Right ventricle myocardium inferior (tissue), 1 donor: ENCODE measurements at regions of chr4 and their contacts with region 1.

Region 1: DNA sequence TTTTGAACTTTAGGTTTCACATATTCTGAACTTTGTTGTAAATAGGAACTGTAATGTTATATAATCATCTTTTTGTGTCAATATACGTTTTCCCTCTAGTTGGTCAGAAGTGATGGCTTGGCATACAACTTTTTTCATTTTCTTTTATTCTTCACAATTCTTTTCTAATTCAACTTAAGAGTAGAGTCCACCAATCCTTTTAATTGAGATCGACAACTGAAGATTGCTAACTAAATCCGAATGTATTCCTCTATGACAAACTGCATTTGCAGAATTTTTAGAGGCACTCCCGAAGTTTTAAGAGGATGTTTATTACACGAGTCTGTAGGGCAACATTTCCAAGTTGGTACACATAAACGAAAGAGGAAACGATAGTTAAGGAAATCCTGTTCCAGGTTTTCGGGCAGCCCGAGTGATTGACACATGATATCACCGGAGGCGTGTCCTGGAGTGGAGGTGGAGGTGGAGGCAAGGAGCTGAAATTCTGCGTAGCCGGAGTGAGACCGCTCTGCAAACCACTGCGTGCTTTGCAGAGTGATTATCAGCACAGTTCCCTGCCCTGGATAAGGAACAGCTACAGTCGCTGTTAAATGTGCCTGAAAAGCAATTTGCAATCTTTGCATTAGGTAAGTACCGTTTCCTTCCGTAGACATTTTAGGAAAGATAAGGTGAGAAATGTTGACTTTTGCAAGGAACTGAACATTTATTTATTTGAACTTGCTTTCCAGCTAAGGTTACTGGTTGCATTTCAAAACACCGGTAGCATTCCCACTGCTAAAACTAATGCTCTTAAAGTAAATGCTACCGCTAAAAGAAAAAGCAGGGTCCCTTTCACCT is at the start of gene SPRY1:
- DNase-seq: peak; percentile 89
- ATAC-seq: peak; percentile 89
- total RNA-seq, gene SPRY1: 37.0 TPM

Region 2: DNA sequence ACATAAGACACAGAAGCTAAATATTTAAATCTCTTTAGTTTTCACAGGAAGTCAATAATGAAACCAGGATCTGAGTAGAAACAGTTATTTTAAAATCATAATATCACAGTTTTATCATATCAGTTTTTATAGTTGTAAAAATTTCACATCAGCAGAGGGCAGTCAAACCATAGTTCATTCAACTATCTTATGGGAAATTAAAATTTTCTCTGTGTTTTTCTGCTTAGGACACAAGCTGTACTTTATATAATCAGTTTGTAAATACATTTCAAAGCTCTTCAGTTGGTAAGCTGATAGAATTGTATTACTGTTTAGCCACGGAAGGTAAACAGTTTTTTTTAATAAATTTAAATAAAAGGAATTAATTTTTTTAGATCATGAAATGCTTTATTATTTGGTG is 269.3 kb before region 1 on chr4:
- intact Hi-C with region 1: loop called (anchors 5 kb)
- DNase-seq: no peak
- ATAC-seq: no peak

Region 3: DNA sequence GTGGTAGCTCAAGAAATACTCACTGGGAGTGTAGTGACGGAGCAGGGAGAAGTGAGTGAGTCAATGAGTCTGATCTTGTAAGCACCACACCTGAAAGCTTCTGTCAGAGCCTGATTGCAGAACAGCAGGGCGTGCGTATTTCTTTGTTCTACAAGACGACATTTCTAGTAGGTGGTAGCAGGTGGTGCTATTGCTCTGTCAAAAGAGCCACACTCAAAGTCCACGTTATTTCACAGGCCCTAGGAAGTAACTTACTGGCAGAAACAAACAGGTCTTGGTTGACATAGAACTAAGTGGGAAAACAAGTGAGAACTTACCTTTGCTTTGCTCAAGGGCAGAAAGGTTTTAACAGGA is 46.4 kb before region 1 on chr4:
- intact Hi-C with region 1: loop called (anchors 5 kb)
- DNase-seq: no peak
- ATAC-seq: no peak

Region 4: GRCh38 chr4:123461996-123462395 is 65.5 kb after region 1 on chr4:
- intact Hi-C with region 1: no loop called
- DNase-seq: no peak
- ATAC-seq: no peak

Region 5: GRCh38 chr4:123555233-123555806 is 158.8 kb after region 1 on chr4:
- intact Hi-C with region 1: loop called (anchors 10 kb)
- DNase-seq: peak; percentile 80
- ATAC-seq: peak; percentile 95

Region 6: GRCh38 chr4:123744664-123745290 is 348.3 kb after region 1 on chr4:
- intact Hi-C with region 1: loop called (anchors 5 kb)
- DNase-seq: no peak
- ATAC-seq: peak; percentile 75